Lower leg skin (tissue), 4 donors: ENCODE measurements at regions of chr2 and their contacts with region 1.

Region 1: GRCh38 chr2:29923110-29923721 is 1.8 kb upstream of the ALK start:
- DNase-seq: peak in 1 of 2 donors; percentile 42
- H3K4me3 ChIP-seq: no peak overlapping the region
- CTCF ChIP-seq: no peak
- POLR2A ChIP-seq: no peak

Region 2: GRCh38 chr2:30026087-30027055 is 103.2 kb after region 1 on chr2:
- intact Hi-C with region 1: loop called (anchors 10 kb)
- DNase-seq: peak in 1 of 2 donors; percentile 23
- H3K4me3 ChIP-seq: no peak overlapping the region
- CTCF ChIP-seq: no peak
- POLR2A ChIP-seq: no peak

Region 3: DNA sequence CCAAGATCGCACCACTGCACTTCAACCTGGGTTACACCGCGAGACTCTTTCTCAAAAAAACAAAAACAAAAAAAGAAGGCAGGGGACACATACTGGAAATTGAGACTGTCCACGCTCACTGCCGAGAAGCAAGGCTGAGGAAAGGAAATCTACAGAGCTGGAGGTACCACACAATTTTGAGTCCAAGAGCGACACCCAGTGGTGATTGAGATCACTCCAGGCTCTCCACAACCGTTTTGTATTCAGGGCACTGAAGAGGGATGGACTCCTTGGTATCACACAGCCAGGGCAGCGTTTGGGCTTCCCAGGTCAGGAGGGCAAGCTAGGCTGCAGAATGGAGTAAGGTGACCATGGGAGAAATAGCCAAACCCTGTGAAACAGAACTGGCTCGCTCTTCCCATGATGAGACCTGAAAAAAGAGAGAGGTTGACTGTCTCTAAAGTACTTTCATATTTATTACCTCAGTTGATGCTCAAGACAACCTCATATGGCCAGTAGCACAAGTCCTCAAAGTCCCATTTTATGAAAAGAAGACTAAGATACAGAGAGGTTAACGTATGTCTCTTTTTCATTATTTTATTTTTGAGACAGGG is 149.1 kb after region 1 on chr2:
- intact Hi-C with region 1: loop called (anchors 5 kb)
- DNase-seq: peak in 1 of 2 donors; percentile 48
- H3K4me3 ChIP-seq: no peak overlapping the region
- CTCF ChIP-seq: no peak
- POLR2A ChIP-seq: no peak

Region 4: GRCh38 chr2:30217644-30218337 is 294.6 kb after region 1 on chr2:
- intact Hi-C with region 1: no loop called
- DNase-seq: peak in 1 of 2 donors; percentile 74
- H3K4me3 ChIP-seq: no peak overlapping the region
- CTCF ChIP-seq: no peak
- POLR2A ChIP-seq: no peak

Region 5: GRCh38 chr2:30239308-30239985 is 316.2 kb after region 1 on chr2:
- intact Hi-C with region 1: no loop called
- DNase-seq: peak; percentile 81 to 95
- H3K4me3 ChIP-seq: no peak overlapping the region
- CTCF ChIP-seq: peak in 1 of 3 donors; percentile 97
- POLR2A ChIP-seq: no peak